ENCODE measurements at regions of chr17 and their contacts with region 1.

Region 1: GRCh38 chr17:63859257-63859656 is 14.2 kb downstream of the CSH2 start:
- DNase-seq: no peak
- ATAC-seq: no peak
- H3K4me3 Mint-ChIP-seq: no peak overlapping the region
- H3K27ac Mint-ChIP-seq: no peak overlapping the region
- H3K4me1 Mint-ChIP-seq: no peaks in the 10 kb centered on the region
- H3K27me3 Mint-ChIP-seq: peaks cover 22% of the 10 kb centered on the region

Region 2: GRCh38 chr17:63848834-63849700 is 10.2 kb before region 1 on chr17:
- CTCF ChIA-PET with region 1: interaction called, 47 read pairs
- POLR2A ChIA-PET with region 1: interaction called, 5 read pairs
- DNase-seq: peak; percentile 96
- ATAC-seq: peak; percentile 97
- H3K4me3 Mint-ChIP-seq: peak overlapping the region; percentile 63
- H3K27ac Mint-ChIP-seq: peak overlapping the region; percentile 97
- H3K4me1 Mint-ChIP-seq: peaks cover 21% of the 10 kb centered on the region
- H3K27me3 Mint-ChIP-seq: peaks cover 14% of the 10 kb centered on the region

Measured in activated CD8-positive, alpha-beta T cell treated with anti-CD3 and anti-CD28 coated beads, Interleukin-2, amount 10 ng/mL, durations not matched to agents 7 days and 5 days (primary cell).